ENCODE measurements at regions of chr3 and their contacts with region 1.

Region 1: GRCh38 chr3:58568572-58569286 is 8.5 kb downstream of the FAM107A start:
- DNase-seq: peak; percentile 83
- H3K4me3 ChIP-seq: no peak overlapping the region
- H3K27ac ChIP-seq: no peak overlapping the region
- H3K4me1 ChIP-seq: peaks cover 24% of the 10 kb centered on the region
- H3K27me3 ChIP-seq: no peaks in the 10 kb centered on the region
- CTCF ChIP-seq: peak; percentile 84 to 88
- POLR2A ChIP-seq: no peak

Region 2: DNA sequence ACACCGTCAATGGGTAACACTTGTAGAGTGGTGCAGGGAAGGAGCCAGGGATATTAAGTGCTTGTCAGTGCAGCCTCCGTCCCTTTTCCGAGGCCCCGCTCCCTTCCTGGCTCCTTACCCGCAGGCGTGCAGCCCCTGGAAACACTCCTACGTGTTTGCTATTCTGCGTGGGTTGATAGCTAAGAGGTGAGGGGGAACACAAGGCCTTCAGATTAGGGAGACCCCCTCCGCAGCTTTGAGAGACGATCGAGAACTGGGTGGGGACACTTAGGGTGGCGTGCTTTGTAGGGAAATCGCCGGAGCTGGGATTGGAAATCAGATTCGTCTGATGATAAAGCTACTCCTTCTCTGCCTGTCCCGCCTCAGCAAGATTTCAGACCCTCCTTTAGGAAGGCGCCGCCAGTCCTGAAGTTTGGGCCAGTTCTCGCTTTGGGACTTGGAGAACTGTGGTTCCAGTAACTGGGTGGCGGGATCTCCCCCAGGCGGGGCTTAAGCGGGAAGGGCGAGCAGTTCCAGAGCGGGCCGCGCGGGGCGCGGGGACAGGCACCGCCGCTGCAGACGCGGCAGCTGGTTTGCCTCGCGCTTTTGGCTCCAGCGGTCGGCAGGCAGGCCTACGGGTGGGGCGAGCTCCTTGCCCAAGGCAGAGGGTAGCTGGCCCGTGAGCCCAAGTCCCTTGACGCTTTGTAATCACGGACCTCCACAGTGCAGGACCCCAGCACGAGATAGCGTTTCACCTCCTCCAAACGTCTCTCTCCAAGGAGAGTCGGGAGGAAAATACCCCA is 16.5 kb after region 1 on chr3:
- CTCF ChIA-PET with region 1: interaction called, 20 read pairs
- POLR2A ChIA-PET with region 1: no interaction called
- dilution Hi-C with region 1: no loop called
- intact Hi-C with region 1: no loop called
- DNase-seq: peak; percentile 67
- H3K4me3 ChIP-seq: peak overlapping the region; percentile 40 to 65 (median 51)
- H3K27ac ChIP-seq: no peak overlapping the region
- H3K4me1 ChIP-seq: peaks cover 5% of the 10 kb centered on the region
- H3K27me3 ChIP-seq: peaks cover 20 to 26% of the 10 kb centered on the region in 2 experiments
- CTCF ChIP-seq: peak; percentile 74 to 87
- POLR2A ChIP-seq: no peak

Region 3: DNA sequence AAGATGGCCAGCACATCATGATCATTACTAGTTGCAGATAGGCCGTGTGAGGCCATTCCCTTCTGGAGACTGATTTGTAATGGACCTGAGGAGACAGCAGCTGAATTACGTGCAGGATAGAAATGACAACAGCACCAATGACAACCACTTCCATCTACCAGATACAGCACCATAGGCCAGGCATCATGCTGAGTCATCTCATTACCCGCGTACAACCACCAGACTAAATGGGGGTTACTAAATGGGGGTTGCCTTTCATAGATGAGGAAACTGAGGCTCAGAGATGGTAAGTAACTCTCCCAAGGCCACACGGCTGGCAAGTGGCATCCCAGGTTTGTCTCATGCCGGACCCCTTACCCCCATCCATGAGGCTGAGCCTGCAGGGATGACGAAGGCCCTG is 41.3 kb after region 1 on chr3:
- CTCF ChIA-PET with region 1: interaction called, 17 read pairs
- POLR2A ChIA-PET with region 1: no interaction called
- dilution Hi-C with region 1: no loop called
- intact Hi-C with region 1: no loop called
- DNase-seq: no peak
- H3K4me3 ChIP-seq: no peak overlapping the region
- H3K27ac ChIP-seq: no peak overlapping the region
- H3K4me1 ChIP-seq: no peaks in the 10 kb centered on the region
- H3K27me3 ChIP-seq: peaks cover 3 to 9% of the 10 kb centered on the region in 2 experiments
- CTCF ChIP-seq: no peak
- POLR2A ChIP-seq: no peak

Region 4: GRCh38 chr3:58659051-58659675 is 90.4 kb after region 1 on chr3:
- CTCF ChIA-PET with region 1: interaction called, 3 read pairs
- POLR2A ChIA-PET with region 1: no interaction called
- dilution Hi-C with region 1: no loop called
- intact Hi-C with region 1: loop called (anchors 1 kb)
- DNase-seq: peak; percentile 59
- H3K4me3 ChIP-seq: no peak overlapping the region
- H3K27ac ChIP-seq: no peak overlapping the region
- H3K4me1 ChIP-seq: peaks cover 2% of the 10 kb centered on the region
- H3K27me3 ChIP-seq: peaks cover 0 to 2% of the 10 kb centered on the region in 2 experiments
- CTCF ChIP-seq: peak; percentile 49 to 60
- POLR2A ChIP-seq: no peak

Measured in endothelial cell of umbilical vein (primary cell).